Activated B cell treated with CpG ODN at 0.5 μM for 24 hours (primary cell): ENCODE measurements at regions of chr2 and their contacts with region 1.

Region 1: DNA sequence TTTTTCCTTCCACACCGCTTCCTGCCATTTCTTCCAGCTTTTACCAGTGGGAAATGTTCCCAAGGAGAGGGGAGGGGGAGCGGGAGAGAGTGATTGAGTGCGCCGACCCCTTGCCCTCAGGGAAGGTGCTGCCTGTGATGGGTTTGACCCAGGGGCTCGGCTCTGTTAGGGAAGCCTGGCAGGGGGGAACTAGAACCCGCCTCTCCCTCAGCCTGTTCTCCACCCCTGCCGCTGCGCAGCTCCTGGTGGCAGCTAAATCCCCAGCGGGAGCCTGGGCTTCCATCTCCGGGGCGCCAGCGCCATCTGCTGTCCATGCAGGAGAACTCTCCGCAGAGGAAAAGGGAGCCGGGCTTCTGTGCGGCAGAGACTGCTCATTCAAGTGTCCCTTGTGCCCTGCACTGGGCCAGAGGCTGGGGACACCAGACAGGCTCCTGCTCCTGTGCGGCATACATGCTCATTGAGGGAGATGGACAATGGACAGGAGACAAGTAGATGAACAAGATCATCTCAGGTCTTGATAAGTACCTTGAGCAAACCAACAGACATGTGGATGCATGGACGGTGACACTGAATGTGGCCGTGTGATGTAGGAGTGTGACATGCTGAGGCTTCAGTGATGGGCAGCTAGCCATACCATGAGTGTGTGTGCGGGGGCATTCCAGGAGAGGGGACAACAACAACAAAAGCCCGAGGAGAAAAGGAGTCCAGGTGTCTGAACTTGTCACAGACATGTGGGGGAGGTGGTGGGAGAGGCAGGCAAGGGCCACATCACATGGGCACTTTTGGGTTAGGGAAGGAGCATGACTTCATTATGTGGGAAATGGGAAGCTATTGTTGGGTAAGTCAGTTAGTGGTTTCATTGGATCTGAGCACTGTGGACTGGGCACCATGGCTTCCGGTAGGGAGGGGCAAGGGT is 13.3 kb downstream of the CHPF start:
- DNase-seq: peak; percentile 73
- ATAC-seq: peak; percentile 97
- H3K4me3 Mint-ChIP-seq: no peak overlapping the region
- H3K27ac Mint-ChIP-seq: no peak overlapping the region
- H3K4me1 Mint-ChIP-seq: no peaks in the 10 kb centered on the region
- H3K27me3 Mint-ChIP-seq: peaks cover 60% of the 10 kb centered on the region
- CTCF ChIP-seq: peak; percentile 91

Region 2: GRCh38 chr2:219459460-219460311 is 70.6 kb before region 1 on chr2:
- CTCF ChIA-PET with region 1: interaction called, 53 read pairs
- POLR2A ChIA-PET with region 1: no interaction called
- intact Hi-C with region 1: loop called (anchors 1 kb)
- DNase-seq: peak; percentile 39
- ATAC-seq: peak; percentile 62
- H3K4me3 Mint-ChIP-seq: no peak overlapping the region
- H3K27ac Mint-ChIP-seq: no peak overlapping the region
- H3K4me1 Mint-ChIP-seq: no peaks in the 10 kb centered on the region
- H3K27me3 Mint-ChIP-seq: peaks cover 13% of the 10 kb centered on the region
- CTCF ChIP-seq: peak; percentile 70

Region 3: DNA sequence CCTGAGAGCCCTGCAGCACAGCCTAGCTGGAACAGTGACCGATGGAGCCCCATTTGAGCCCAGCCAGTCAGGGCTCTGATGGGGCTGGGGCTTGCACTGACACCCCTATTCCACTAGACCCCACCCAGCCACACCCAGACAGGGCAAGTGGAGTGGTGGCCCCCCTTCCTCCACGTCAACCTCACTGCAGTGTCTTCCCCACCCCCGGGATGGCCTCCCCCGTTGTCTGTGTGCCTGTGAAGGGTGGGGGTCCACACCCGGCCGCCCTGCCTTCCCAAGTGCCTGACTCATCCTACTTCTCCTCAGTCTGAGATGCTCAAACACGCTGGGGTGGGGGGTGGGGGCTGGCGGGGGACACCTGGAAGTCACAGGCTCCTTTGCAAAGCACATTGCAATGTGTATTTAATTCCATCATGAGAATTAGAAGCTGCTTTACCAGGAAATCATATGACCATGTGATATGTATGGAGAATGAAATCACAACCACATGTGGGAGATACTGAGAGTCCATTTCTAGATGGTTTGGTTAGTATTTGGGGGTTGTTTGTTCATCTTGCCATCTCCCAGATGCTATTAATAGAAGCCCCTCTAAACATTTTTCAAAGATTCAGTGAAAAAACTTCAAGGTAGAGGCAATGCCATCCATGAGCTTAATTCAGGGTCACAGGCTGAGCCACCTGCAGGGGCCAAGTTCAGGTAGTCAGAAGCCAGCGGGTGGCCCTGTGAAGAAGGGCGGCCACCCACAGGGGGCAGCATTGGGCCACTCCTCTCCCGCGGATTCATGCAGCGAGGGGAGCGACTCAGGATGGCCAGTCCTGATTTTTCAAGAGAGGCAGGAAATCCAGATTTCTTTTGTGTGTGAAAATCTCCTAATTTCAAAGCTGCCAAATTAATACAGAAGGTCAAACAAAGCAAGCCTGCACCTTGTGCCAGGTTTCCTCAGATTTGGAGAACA is 54.3 kb before region 1 on chr2:
- CTCF ChIA-PET with region 1: interaction called, 9 read pairs
- POLR2A ChIA-PET with region 1: no interaction called
- intact Hi-C with region 1: loop called (anchors 1 kb)
- DNase-seq: no peak
- ATAC-seq: no peak
- H3K4me3 Mint-ChIP-seq: no peak overlapping the region
- H3K27ac Mint-ChIP-seq: no peak overlapping the region
- H3K4me1 Mint-ChIP-seq: peaks cover 2% of the 10 kb centered on the region
- H3K27me3 Mint-ChIP-seq: peaks cover 37% of the 10 kb centered on the region
- CTCF ChIP-seq: no peak

Region 4: DNA sequence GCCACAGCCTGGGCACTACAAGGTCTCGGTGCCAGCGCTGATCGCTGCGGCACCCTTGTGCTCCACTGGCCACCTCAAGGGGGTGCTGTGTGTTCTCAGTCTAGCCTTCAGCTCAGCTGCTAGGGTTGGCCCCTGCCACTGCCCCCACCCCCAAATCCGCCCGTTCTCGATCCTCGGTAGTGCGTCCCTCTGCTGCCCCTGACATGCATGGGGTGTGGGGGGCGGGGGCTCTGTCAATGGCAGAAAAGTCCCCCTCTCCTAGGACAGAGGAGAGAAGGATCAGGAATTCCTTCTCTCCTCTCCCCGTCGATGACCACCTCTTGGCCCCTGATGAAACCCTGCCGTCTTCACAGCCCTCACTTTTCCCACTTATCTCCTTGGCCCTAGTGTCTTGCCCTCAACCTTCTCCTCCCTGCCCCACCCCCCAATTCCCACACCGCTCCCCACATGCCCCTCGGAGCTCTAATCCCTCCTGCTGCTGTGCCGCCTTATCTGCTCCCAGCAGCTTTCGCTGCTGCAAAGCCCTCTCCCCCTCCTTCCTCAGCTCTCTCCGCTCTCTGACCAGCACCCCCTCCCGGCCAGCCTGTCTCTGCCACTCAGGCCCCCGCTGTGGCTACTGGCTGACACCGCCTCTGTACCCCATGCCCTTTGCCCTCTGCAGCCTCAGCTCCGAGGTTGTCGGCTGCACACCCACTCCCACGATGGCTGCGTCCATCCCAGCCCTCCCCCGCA is 20.4 kb before region 1 on chr2:
- CTCF ChIA-PET with region 1: interaction called, 16 read pairs
- POLR2A ChIA-PET with region 1: no interaction called
- intact Hi-C with region 1: loop called (anchors 2 kb)
- DNase-seq: peak; percentile 37
- ATAC-seq: peak; percentile 76
- H3K4me3 Mint-ChIP-seq: peak overlapping the region; percentile 38
- H3K27ac Mint-ChIP-seq: no peak overlapping the region
- H3K4me1 Mint-ChIP-seq: peaks cover 22% of the 10 kb centered on the region
- H3K27me3 Mint-ChIP-seq: peaks cover 49% of the 10 kb centered on the region
- CTCF ChIP-seq: no peak